ENCODE measurements at regions of chr19 and their contacts with region 1.

Region 1: DNA sequence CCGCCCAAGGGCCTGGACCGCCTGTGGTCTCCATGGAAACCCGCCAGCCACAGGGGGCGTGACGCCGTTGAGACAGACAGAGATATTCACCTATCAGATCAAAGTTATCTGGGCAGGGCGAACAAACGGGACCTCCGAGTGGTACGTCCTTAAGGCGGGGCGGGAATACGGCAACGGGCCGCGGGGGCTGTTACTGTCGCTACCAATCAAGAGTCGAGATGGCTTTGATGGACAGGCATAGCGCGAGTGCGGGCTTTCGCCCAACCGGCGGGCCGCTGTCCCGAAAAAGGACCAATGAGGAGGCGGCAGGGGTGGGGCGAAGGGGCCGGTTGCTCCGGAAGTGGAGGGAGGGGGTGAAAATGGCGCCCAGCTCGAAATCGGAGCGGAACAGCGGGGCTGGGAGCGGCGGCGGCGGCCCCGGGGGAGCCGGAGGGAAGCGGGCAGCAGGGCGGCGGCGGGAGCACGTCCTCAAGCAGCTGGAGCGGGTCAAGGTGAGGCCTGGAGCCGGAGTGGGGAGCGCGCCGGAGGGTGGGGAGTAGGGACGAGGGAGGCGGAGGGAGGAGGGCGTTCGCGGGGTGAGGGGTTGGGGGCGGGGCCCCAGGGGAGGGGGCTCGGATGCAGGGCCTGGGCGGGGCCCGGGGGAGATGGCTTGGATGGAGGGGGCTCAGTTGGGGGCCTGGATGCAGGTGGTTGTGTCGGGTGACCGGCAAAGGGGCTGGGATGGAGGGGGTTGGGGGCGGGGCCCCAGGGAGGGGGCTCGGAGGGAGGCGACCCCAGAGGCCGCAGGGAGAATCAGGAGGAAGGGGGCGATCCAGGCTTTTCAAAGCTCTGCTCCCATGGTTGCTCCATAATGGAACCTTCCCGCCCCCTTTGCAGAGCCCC is at the start of gene DCAF15:
- DNase-seq: peak; percentile 99
- H3K4me3 ChIP-seq: peak within 1 kb of the TSS; percentile 90
- H3K4me3 Mint-ChIP-seq: peak within 1 kb of the TSS; percentile 71
- H3K27ac Mint-ChIP-seq: peak within 1 kb of the TSS; percentile 81
- H3K4me1 ChIP-seq: 0 out of 2 replicates have a peak, but pooled peaks cover 6% of the 10 kb centered on the region
- H3K4me1 Mint-ChIP-seq: no peaks in the 10 kb centered on the region
- H3K27me3 ChIP-seq: no peaks in the 10 kb centered on the region
- H3K27me3 Mint-ChIP-seq: no peaks in the 10 kb centered on the region
- CTCF ChIP-seq: no peak
- total RNA-seq, gene DCAF15: 41.1 and 43.0 TPM in 2 replicates

Region 2: DNA sequence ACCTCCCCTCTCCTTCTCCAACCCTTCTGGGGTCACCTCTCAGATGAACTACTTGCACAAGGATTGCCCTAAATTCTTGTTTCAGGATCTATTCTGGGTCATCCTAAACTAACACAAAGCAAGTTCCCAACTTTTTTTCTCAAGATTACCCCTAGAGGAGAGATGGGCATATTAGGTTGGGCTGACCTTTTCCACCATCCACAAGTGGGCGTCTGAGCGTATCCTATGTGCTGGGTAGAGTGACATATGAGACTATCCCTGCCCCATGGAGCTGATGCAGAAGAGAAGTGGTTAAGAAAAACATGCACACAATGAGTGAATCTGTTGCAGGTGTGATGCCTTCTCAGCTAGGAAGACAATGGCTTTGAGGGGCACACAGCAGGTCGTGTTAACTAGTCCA is 578.8 kb before region 1 on chr19:
- CTCF ChIA-PET with region 1: no interaction called
- POLR2A ChIA-PET with region 1: no interaction called
- intact Hi-C with region 1: no loop called
- DNase-seq: no peak
- H3K4me3 ChIP-seq: no peak overlapping the region
- H3K4me3 Mint-ChIP-seq: no peak overlapping the region
- H3K27ac Mint-ChIP-seq: no peak overlapping the region
- H3K4me1 ChIP-seq: no peaks in the 10 kb centered on the region
- H3K4me1 Mint-ChIP-seq: no peaks in the 10 kb centered on the region
- H3K27me3 ChIP-seq: no peaks in the 10 kb centered on the region
- H3K27me3 Mint-ChIP-seq: peaks cover 2% of the 10 kb centered on the region
- CTCF ChIP-seq: no peak

Region 3: DNA sequence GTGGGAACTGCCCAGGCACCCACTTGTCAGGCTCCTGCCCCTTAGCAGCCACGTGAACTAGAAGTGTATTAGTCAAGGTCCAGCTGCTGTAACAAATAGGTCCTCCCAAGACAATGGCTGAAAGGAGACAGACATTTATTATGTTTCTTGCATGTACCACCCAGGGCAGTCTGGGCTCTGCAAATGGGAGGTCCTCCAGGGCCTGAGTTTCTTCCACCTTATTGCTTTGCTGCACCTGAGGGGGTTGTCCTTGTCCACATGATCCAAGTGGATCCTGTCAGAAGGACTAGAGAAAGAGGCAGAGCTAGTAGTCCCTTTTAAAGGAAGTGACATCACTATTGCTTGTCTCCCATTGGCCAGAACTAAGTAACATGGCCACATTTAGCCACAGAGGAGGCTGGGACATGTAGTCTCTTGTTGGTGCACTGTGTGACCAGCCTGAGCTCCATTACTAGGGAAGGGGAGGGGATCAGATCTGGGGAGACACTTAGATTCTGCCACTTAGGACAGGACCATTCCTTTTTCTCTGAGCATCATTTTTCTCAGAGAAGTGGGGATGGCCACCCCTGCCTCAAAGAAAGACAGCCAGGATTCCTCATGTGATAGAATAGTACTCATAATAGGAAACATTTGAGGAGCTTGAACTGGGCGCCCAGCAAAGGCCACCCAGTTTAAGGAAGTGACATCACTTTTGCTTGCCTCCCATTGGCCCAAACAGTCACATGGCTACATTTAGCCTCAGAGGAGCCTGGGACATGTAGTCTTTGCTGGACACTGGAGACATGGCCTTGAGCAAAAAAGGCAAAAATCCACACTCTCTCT is 31.2 kb before region 1 on chr19:
- CTCF ChIA-PET with region 1: no interaction called
- POLR2A ChIA-PET with region 1: interaction called, 6 read pairs
- intact Hi-C with region 1: loop called (anchors 1 kb)
- DNase-seq: peak; percentile 55 to 71
- H3K4me3 ChIP-seq: no peak overlapping the region
- H3K4me3 Mint-ChIP-seq: no peak overlapping the region
- H3K27ac Mint-ChIP-seq: peak overlapping the region; percentile 42
- H3K4me1 ChIP-seq: no peaks in the 10 kb centered on the region
- H3K4me1 Mint-ChIP-seq: no peaks in the 10 kb centered on the region
- H3K27me3 ChIP-seq: no peaks in the 10 kb centered on the region
- H3K27me3 Mint-ChIP-seq: no peaks in the 10 kb centered on the region
- CTCF ChIP-seq: no peak